B cell (primary cell): ENCODE measurements at regions of chr14 and their contacts with region 1.

Region 1: DNA sequence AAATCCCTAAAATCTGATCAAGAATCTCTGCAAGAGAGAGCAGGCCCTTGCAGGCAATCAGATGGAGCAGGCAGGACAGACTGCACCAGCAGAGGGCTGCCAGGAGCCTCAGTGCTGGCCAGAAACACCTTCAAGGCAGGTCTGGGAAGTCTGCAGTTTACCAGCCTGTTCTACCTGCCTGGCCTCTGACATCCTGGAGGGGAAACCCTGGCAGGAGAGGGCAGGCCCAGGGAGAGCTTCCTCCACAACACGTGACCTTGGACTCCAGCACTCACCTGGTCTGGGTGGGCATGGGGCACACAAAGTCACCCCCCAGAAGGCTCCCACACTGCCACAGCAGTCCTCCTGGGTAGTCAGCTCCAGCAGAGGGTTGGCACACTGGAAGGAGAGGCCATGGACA is 56.0 kb downstream of the ISCA2 start:
- DNase-seq: no peak
- ATAC-seq: no peak
- H3K4me3 ChIP-seq: no peak overlapping the region
- H3K4me3 Mint-ChIP-seq: no peak overlapping the region
- H3K27ac ChIP-seq: no peak overlapping the region
- H3K27ac Mint-ChIP-seq: no peak overlapping the region
- H3K4me1 ChIP-seq: no peaks in the 10 kb centered on the region
- H3K4me1 Mint-ChIP-seq: no peaks in the 10 kb centered on the region
- H3K27me3 ChIP-seq: no peaks in the 10 kb centered on the region
- H3K27me3 Mint-ChIP-seq: peaks cover 14% of the 10 kb centered on the region
- CTCF ChIP-seq: no peak

Region 2: DNA sequence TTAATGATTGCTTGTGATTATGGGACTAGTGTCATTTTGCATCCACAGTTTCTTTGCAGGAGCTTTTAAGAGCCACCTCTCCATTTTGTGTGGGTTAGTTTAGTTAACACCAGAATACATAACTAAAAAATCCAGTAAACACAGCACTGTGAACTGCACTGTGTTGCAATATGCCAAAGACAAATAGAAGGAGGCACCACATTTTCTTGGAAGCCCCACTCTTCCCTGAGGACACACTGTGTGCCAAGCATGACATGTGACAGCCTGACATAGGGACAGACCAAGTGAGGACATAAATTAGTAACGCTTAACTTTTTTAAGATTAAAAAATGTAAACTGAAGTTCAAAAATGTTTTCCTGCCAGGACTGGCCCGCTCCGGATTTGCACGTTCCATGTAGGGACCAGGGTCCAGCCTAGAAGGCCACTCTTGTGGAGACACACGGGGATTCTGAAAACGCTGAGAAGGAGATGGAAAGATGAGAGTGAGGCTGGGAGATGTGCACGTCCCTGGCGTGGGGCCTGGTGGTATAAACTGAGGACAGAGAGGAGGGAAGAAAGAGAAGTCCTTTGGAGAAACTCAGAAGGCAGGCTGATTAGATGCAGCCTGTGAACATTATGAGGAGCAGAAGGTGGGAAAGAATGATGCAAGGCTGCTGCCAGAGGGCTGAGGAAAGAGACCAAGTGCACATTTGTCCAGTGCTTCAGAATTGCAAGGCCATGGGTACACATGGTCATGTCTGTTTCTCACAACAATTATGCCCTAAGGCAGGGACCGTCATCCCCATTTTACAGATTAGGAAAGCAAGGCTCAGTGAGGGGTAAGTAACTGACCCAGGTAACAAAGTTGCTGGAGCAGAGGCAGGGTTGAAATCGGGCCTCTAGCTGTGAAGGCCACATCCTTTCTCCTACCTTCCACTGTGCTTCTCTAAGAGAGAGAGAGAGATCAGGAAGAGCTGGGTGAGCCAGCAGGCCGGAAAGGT is 10.9 kb before region 1 on chr14:
- CTCF ChIA-PET with region 1: no interaction called
- POLR2A ChIA-PET with region 1: no interaction called
- intact Hi-C with region 1: no loop called
- DNase-seq: no peak
- ATAC-seq: no peak
- H3K4me3 ChIP-seq: no peak overlapping the region
- H3K4me3 Mint-ChIP-seq: no peak overlapping the region
- H3K27ac ChIP-seq: no peak overlapping the region
- H3K27ac Mint-ChIP-seq: no peak overlapping the region
- H3K4me1 ChIP-seq: no peaks in the 10 kb centered on the region
- H3K4me1 Mint-ChIP-seq: no peaks in the 10 kb centered on the region
- H3K27me3 ChIP-seq: no peaks in the 10 kb centered on the region
- H3K27me3 Mint-ChIP-seq: peaks cover 7% of the 10 kb centered on the region
- CTCF ChIP-seq: no peak

Region 3: DNA sequence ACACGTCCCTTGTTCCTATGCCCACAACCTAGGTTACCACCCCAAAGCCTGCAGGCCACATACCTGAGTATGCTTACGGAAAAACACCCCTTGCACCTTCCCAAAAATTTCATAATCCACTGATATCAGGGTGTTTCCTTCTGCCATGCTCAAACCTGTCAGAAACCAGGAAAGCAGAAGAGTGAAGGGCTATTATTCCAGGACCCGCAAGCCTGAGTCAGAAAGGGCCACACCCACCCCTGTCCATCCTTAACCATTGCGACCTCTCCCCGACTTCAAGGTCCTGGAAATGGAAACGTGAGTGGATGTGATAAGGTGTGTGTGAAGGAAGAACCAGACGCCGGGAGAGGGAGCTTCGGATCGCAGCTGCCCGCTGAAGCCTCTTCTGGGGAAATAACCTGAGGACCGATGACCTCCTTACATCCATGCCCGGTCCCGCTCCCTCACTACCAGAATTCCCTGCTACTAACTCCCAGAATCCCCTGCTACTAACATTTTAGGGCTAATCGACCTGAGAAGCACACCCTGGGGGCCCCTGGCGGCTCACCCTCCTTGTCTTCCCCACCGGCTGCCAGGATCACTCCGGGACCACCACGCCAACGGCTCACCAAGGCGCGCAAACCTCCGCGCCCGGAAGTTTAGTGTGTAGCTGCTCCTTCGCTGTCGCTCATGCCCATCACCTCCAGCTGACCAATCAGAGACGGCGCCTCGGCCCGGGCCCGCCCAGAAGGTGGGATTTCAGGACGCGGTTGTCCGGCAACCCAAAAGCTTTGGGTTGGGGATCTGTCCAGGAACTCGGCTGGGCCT is 514.0 kb after region 1 on chr14 and contains the start of gene ACYP1:
- CTCF ChIA-PET with region 1: no interaction called
- POLR2A ChIA-PET with region 1: interaction called, 12 read pairs
- intact Hi-C with region 1: no loop called
- DNase-seq: peak; percentile 91
- ATAC-seq: peak; percentile 99
- H3K4me3 ChIP-seq: peak within 1 kb of the TSS; percentile 72 to 100 (median 96)
- H3K4me3 Mint-ChIP-seq: peak within 1 kb of the TSS; percentile 100
- H3K27ac ChIP-seq: peak within 1 kb of the TSS; percentile 65 to 73
- H3K27ac Mint-ChIP-seq: peak within 1 kb of the TSS; percentile 95
- H3K4me1 ChIP-seq: peaks cover 12 to 16% of the 10 kb centered on the region in 2 donors
- H3K4me1 Mint-ChIP-seq: peaks cover 20% of the 10 kb centered on the region
- H3K27me3 ChIP-seq: no peaks in the 10 kb centered on the region
- H3K27me3 Mint-ChIP-seq: no peaks in the 10 kb centered on the region
- CTCF ChIP-seq: no peak
- total RNA-seq, gene ACYP1: 34.1 and 46.7 TPM in 2 replicates